Heart left ventricle (tissue), 16 donors: ENCODE measurements at regions of chr20 and their contacts with region 1.

Region 1: DNA sequence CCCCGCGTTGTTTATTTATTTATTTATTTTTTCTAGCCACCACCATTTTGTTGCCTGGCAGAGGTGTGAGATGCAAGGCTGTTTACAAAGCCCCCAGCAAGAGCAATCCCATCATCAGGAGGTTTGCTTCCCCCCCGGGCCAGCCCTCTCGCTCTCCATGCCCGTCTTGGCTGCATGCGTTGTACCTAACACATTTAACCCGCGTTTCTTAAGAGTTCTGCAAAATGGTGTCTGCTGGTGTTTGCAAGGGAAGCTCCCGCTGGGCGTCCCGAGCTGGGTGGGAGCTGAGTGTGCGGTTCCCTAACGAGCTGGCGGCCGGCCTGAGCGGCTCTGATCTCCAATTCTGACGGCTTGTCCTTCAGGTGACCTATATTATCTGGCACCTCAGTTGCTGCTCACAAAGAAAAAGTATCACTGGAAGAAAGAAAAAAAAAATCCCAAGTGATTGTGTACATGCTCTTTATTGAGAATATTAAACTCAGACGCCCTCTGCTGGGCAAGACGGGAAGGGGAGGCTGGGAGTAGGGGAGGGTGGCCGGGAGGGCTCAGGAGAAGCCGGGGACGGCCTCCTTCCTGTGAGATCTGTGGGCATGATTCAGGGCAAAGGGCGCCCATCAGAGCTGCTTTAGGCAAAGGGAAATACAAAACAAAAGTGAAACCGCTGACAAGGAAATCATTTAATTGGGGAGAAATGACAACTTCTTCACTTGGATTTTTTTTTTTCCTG is 154.8 kb downstream of the BCAS1 start:
- DNase-seq: peak; percentile 94 to 97 (median 95)
- ATAC-seq: peak; percentile 86 to 92 (median 90)
- H3K4me3 ChIP-seq: peak overlapping the region; percentile 53 to 80 (median 66)
- H3K27ac ChIP-seq: peak overlapping the region; percentile 79 to 94 (median 88)
- H3K4me1 ChIP-seq: peaks cover 0 to 46% (median 29%) of the 10 kb centered on the region in 12 donors
- H3K27me3 ChIP-seq: no peaks in the 10 kb centered on the region
- CTCF ChIP-seq: peak; percentile 79 to 98 (median 88)
- POLR2A ChIP-seq: no peak

Region 2: DNA sequence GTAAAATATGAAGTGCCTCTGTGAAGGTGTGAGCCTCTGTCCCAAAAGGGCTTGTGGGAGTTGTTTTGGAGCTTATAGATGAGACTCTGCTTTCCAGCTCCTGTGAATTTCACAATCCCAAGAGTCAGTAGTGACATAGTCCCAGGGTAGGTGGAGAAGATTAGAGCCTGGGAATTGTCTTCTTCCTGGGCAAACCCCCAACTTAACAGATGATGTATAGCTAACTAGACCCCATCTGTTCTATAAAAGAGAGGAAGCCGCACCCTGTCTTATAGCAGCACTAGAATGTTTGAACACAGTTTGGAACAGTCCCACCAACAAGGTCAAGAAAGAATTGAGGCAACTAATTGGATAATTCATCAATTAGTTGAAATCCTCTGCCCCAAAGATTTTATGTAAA is 616.7 kb before region 1 on chr20:
- intact Hi-C with region 1: no loop called
- DNase-seq: no peak
- ATAC-seq: no peak
- H3K4me3 ChIP-seq: no peak overlapping the region
- H3K27ac ChIP-seq: no peak overlapping the region
- H3K4me1 ChIP-seq: peaks cover 0 to 6% (median 0%) of the 10 kb centered on the region in 12 donors
- H3K27me3 ChIP-seq: peaks cover 0 to 4% (median 0%) of the 10 kb centered on the region in 9 donors
- CTCF ChIP-seq: no peak
- POLR2A ChIP-seq: no peak

Region 3: DNA sequence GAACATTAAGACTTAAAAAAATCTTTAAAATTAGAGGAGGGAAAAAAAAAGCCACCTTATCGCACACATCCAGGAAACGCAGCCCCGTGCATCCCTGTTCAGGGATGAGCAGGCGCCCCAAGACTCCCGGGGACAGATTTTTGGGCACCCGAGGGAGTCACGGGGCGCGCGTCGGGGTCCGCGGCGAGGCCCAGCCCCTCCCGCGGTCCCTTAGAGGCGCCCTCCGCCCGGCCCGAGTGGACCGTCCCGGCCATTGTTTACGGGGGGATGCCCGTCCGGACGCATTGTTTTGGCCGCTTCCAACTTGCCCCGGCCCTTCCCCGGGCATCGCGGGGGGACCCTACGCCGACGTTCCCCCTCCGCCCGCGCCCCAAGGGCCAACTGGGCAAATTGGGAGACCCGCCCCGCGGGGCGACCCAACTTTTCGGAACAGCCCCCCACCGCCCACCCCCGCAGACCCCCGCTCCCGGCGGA is 322.6 kb before region 1 on chr20:
- intact Hi-C with region 1: no loop called
- DNase-seq: peak in 4 of 5 donors; percentile 46 to 76 (median 60)
- ATAC-seq: peak in 2 of 4 donors; percentile 4 to 6
- H3K4me3 ChIP-seq: peak overlapping the region; percentile 63 to 96 (median 94)
- H3K27ac ChIP-seq: peak overlapping the region; percentile 90 to 100 (median 99)
- H3K4me1 ChIP-seq: peaks cover 0 to 57% (median 30%) of the 10 kb centered on the region in 12 donors
- H3K27me3 ChIP-seq: no peaks in the 10 kb centered on the region
- CTCF ChIP-seq: no peak
- POLR2A ChIP-seq: no peak

Region 4: GRCh38 chr20:53869466-53870258 is 45.9 kb before region 1 on chr20:
- intact Hi-C with region 1: loop called in 4 of 10 experiments (anchors 5 to 10 kb)
- DNase-seq: peak in 4 of 5 donors; percentile 54 to 67 (median 61)
- ATAC-seq: peak; percentile 72 to 94 (median 87)
- H3K4me3 ChIP-seq: peak overlapping the region in 1 of 12 donors; percentile 13
- H3K27ac ChIP-seq: peak overlapping the region in 4 of 12 donors; percentile 20 to 65 (median 52)
- H3K4me1 ChIP-seq: peaks cover 0 to 62% (median 22%) of the 10 kb centered on the region in 12 donors
- H3K27me3 ChIP-seq: no peaks in the 10 kb centered on the region
- CTCF ChIP-seq: peak; percentile 60 to 86 (median 76)
- POLR2A ChIP-seq: no peak

Region 5: GRCh38 chr20:53934421-53935343 is 19.1 kb after region 1 on chr20:
- intact Hi-C with region 1: loop called in 4 of 10 experiments (anchors 2 kb)
- DNase-seq: peak in 4 of 5 donors; percentile 43 to 64 (median 51)
- ATAC-seq: peak; percentile 63 to 91 (median 73)
- H3K4me3 ChIP-seq: peak overlapping the region in 1 of 12 donors; percentile 6
- H3K27ac ChIP-seq: peak overlapping the region; percentile 60 to 91 (median 73)
- H3K4me1 ChIP-seq: peaks cover 3 to 60% (median 26%) of the 10 kb centered on the region in 12 donors
- H3K27me3 ChIP-seq: no peaks in the 10 kb centered on the region
- CTCF ChIP-seq: no peak
- POLR2A ChIP-seq: no peak